ENCODE measurements at regions of chr1 and their contacts with region 1.

Region 1: DNA sequence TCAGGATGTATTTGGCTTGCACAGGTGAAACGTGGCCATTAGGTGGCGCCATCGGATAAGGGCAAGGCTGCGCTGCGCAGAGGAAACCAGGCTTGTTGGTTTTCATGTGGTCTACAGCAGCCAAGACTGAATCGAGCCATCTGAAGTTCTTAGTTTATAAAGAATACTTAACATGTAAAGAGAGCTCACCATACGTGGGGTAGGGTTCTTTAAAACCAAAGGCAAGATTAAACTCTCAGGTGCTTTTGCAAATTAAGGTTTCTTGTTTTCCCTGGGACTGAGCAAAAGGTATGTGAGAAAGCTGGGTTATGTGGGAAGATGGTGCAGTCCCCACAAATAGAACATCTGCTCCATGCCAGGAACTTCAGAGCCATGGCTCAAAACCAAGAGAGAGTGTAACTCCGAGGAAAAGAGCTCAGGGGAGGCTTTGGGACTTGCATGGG is 9.3 kb downstream of the MASP2 start:
- DNase-seq: peak; percentile 83 to 85 (median 85)
- H3K4me3 ChIP-seq: no peak overlapping the region
- H3K4me3 Mint-ChIP-seq: no peak overlapping the region
- H3K27ac ChIP-seq: no peak overlapping the region
- H3K27ac Mint-ChIP-seq: peak overlapping the region in 2 of 7 donors; percentile 23 to 47
- H3K4me1 ChIP-seq: peaks cover 7% of the 10 kb centered on the region
- H3K4me1 Mint-ChIP-seq: peaks cover 5 to 7% (median 6%) of the 10 kb centered on the region in 4 donors
- H3K27me3 ChIP-seq: no peaks in the 10 kb centered on the region
- H3K27me3 Mint-ChIP-seq: peaks cover 2 to 6% of the 10 kb centered on the region in 2 donors

Region 2: GRCh38 chr1:10438677-10439163 is 599.0 kb before region 1 on chr1:
- CTCF ChIA-PET with region 1: no interaction called
- POLR2A ChIA-PET with region 1: no interaction called
- intact Hi-C with region 1: no loop called
- DNase-seq: no peak
- H3K4me3 ChIP-seq: no peak overlapping the region
- H3K4me3 Mint-ChIP-seq: no peak overlapping the region
- H3K27ac ChIP-seq: no peak overlapping the region
- H3K27ac Mint-ChIP-seq: peak overlapping the region in 1 of 7 donors; percentile 71
- H3K4me1 ChIP-seq: no peaks in the 10 kb centered on the region
- H3K4me1 Mint-ChIP-seq: no peaks in the 10 kb centered on the region
- H3K27me3 ChIP-seq: no peaks in the 10 kb centered on the region
- H3K27me3 Mint-ChIP-seq: no peaks in the 10 kb centered on the region

Region 3: GRCh38 chr1:11080931-11081330 is 43.2 kb after region 1 on chr1:
- CTCF ChIA-PET with region 1: interaction called, 10 read pairs
- POLR2A ChIA-PET with region 1: no interaction called
- intact Hi-C with region 1: no loop called
- DNase-seq: no peak
- H3K4me3 ChIP-seq: no peak overlapping the region
- H3K4me3 Mint-ChIP-seq: no peak overlapping the region
- H3K27ac ChIP-seq: no peak overlapping the region
- H3K27ac Mint-ChIP-seq: peak overlapping the region in 1 of 7 donors; percentile 7
- H3K4me1 ChIP-seq: no peaks in the 10 kb centered on the region
- H3K4me1 Mint-ChIP-seq: peaks cover 0 to 2% (median 0%) of the 10 kb centered on the region in 4 donors
- H3K27me3 ChIP-seq: no peaks in the 10 kb centered on the region
- H3K27me3 Mint-ChIP-seq: no peaks in the 10 kb centered on the region

Region 4: GRCh38 chr1:11147197-11147770 is 109.5 kb after region 1 on chr1:
- CTCF ChIA-PET with region 1: interaction called, 16 read pairs
- POLR2A ChIA-PET with region 1: no interaction called
- intact Hi-C with region 1: no loop called
- DNase-seq: no peak
- H3K4me3 ChIP-seq: no peak overlapping the region
- H3K4me3 Mint-ChIP-seq: no peak overlapping the region
- H3K27ac ChIP-seq: no peak overlapping the region
- H3K27ac Mint-ChIP-seq: peak overlapping the region in 1 of 7 donors; percentile 30
- H3K4me1 ChIP-seq: no peaks in the 10 kb centered on the region
- H3K4me1 Mint-ChIP-seq: peaks cover 0 to 8% (median 0%) of the 10 kb centered on the region in 4 donors
- H3K27me3 ChIP-seq: no peaks in the 10 kb centered on the region
- H3K27me3 Mint-ChIP-seq: no peaks in the 10 kb centered on the region

Region 5: GRCh38 chr1:11248155-11248554 is 210.4 kb after region 1 on chr1:
- CTCF ChIA-PET with region 1: interaction called, 21 read pairs
- POLR2A ChIA-PET with region 1: no interaction called
- intact Hi-C with region 1: no loop called
- DNase-seq: no peak
- H3K4me3 ChIP-seq: no peak overlapping the region
- H3K4me3 Mint-ChIP-seq: no peak overlapping the region
- H3K27ac ChIP-seq: no peak overlapping the region
- H3K27ac Mint-ChIP-seq: peak overlapping the region in 6 of 7 donors; percentile 50 to 85 (median 72)
- H3K4me1 ChIP-seq: peaks cover 38% of the 10 kb centered on the region
- H3K4me1 Mint-ChIP-seq: peaks cover 19 to 32% (median 23%) of the 10 kb centered on the region in 4 donors
- H3K27me3 ChIP-seq: no peaks in the 10 kb centered on the region
- H3K27me3 Mint-ChIP-seq: no peaks in the 10 kb centered on the region

Region 6: GRCh38 chr1:11645670-11646265 is 608.0 kb after region 1 on chr1:
- CTCF ChIA-PET with region 1: interaction called, 129 read pairs
- POLR2A ChIA-PET with region 1: interaction called, 3 read pairs
- intact Hi-C with region 1: no loop called
- DNase-seq: peak; percentile 71 to 75 (median 73)
- H3K4me3 ChIP-seq: no peak overlapping the region
- H3K4me3 Mint-ChIP-seq: no peak overlapping the region
- H3K27ac ChIP-seq: no peak overlapping the region
- H3K27ac Mint-ChIP-seq: no peak overlapping the region
- H3K4me1 ChIP-seq: peaks cover 15% of the 10 kb centered on the region
- H3K4me1 Mint-ChIP-seq: peaks cover 5 to 21% (median 12%) of the 10 kb centered on the region in 4 donors
- H3K27me3 ChIP-seq: no peaks in the 10 kb centered on the region
- H3K27me3 Mint-ChIP-seq: peaks cover 0 to 2% of the 10 kb centered on the region in 2 donors